ENCODE measurements at regions of chr3 and their contacts with region 1.

Region 1: GRCh38 chr3:72912532-72912931 is 24.7 kb downstream of the GXYLT2 start:
- DNase-seq: no peak
- H3K4me3 ChIP-seq: no peak overlapping the region
- H3K27ac ChIP-seq: no peak overlapping the region
- H3K4me1 ChIP-seq: no peaks in the 10 kb centered on the region
- H3K27me3 ChIP-seq: no peaks in the 10 kb centered on the region
- CTCF ChIP-seq: no peak
- EP300 ChIP-seq: no peak
- POLR2A ChIP-seq: no peak
- RAD21 ChIP-seq: no peak

Region 2: GRCh38 chr3:72891053-72891855 is 21.3 kb before region 1 on chr3:
- CTCF ChIA-PET with region 1: interaction called, 13 read pairs
- POLR2A ChIA-PET with region 1: no interaction called
- DNase-seq: no peak
- H3K4me3 ChIP-seq: no peak overlapping the region
- H3K27ac ChIP-seq: no peak overlapping the region
- H3K4me1 ChIP-seq: peaks cover 2 to 8% (median 6%) of the 10 kb centered on the region in 4 experiments; a peak in 6 of 7 replicates
- H3K27me3 ChIP-seq: peaks cover 0 to 37% (median 18%) of the 10 kb centered on the region in 4 experiments; a peak in 5 of 7 replicates
- CTCF ChIP-seq: no peak
- EP300 ChIP-seq: no peak
- POLR2A ChIP-seq: no peak
- RAD21 ChIP-seq: no peak; a peak in 1 of 4 replicates

Region 3: GRCh38 chr3:72924055-72924454 is 11.5 kb after region 1 on chr3:
- CTCF ChIA-PET with region 1: interaction called, 10 read pairs
- POLR2A ChIA-PET with region 1: no interaction called
- DNase-seq: no peak
- H3K4me3 ChIP-seq: no peak overlapping the region
- H3K27ac ChIP-seq: no peak overlapping the region
- H3K4me1 ChIP-seq: peaks cover 0 to 2% (median 0%) of the 10 kb centered on the region in 4 experiments; a peak in 1 of 7 replicates
- H3K27me3 ChIP-seq: no peaks in the 10 kb centered on the region
- CTCF ChIP-seq: peak; percentile 28 to 45 (median 43); a peak in 3 of 4 replicates
- EP300 ChIP-seq: no peak
- POLR2A ChIP-seq: no peak
- RAD21 ChIP-seq: peak in 1 of 2 experiments; percentile 3; a peak in 1 of 4 replicates